ENCODE measurements at regions of chr17 and their contacts with region 1.

Region 1: DNA sequence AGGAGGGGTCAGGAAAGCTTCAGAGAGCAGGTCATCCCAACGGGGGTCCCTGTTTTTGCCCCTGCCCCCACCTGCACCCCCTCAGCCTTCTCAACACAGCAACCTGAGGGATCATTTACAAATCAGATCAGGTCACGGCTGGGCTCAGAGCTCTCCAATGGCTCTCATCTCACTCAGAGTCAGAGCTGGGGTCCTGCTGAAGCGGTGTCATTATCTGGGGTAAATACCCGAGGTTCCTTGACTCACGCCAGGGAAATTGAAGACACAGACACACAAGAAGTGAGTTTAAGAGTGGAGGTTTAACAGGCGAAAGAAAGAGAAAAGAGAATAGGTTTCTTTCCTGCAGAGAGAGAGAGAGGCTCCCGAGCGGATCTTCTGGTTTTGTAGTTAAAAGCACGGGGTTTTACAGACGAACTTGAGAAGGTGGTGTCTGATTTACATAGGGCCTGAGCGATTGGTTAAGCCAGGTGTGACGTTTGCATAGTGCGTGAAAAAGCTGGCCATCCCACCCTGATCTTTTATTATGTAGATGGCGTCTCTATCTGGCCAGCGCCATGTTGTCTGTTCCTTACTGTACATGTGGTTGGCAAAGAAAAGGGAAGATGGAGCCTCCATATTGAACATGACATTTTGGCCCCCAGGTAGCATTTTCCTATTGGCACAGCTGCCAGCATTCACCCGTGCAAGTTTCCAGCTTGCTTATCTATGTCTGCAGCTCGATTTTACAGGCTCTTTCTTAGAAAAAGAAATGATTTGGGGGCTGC is 51.4 kb downstream of the WSB1 start:
- DNase-seq: peak; percentile 61 to 95 (median 76)
- ATAC-seq: peak; percentile 93
- H3K4me3 ChIP-seq: peak overlapping the region; percentile 40
- H3K27ac ChIP-seq: peak overlapping the region; percentile 95
- H3K4me1 ChIP-seq: peaks cover 25 to 48% of the 10 kb centered on the region in 2 experiments
- H3K27me3 ChIP-seq: no peaks in the 10 kb centered on the region
- CTCF ChIP-seq: no peak
- EP300 ChIP-seq: no peak; the same call in 1 of the 2 replicates
- POLR2A ChIP-seq: peak; percentile 92
- RAD21 ChIP-seq: no peak

Region 2: GRCh38 chr17:27332485-27333409 is 12.6 kb before region 1 on chr17:
- CTCF ChIA-PET with region 1: no interaction called
- POLR2A ChIA-PET with region 1: interaction called, 39 read pairs
- in situ Hi-C with region 1: no loop called
- intact Hi-C with region 1: no loop called
- DNase-seq: peak; percentile 92 to 99 (median 94)
- ATAC-seq: peak; percentile 97
- H3K4me3 ChIP-seq: peak overlapping the region; percentile 39
- H3K27ac ChIP-seq: peak overlapping the region; percentile 88
- H3K4me1 ChIP-seq: peaks cover 22 to 31% of the 10 kb centered on the region in 2 experiments; a peak in 4 of 5 replicates
- H3K27me3 ChIP-seq: no peaks in the 10 kb centered on the region
- CTCF ChIP-seq: peak; percentile 90 to 96 (median 95)
- EP300 ChIP-seq: peak; percentile 28; the same call in 1 of the 2 replicates
- POLR2A ChIP-seq: peak; percentile 72
- RAD21 ChIP-seq: peak; percentile 98 to 99

Region 3: DNA sequence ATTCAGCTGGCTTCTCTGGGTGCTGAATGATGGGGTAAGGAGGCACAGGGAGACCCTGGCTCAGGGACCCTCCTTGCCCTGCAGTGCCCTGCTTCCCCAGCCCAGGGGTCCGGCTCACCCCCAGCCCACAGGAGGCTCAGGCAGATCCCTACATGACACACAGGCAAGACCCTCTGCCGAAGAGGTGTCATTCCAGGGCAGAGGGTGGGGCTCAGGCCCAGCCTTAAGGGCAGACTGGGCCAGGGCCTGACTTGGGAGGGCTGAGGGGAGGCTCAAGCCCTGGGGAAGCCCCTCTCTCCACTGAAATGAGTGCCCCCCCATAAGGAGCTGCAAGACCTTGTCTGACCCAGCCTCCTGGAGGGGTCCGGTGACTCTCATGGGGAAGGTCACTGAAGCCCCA is 80.7 kb after region 1 on chr17:
- CTCF ChIA-PET with region 1: no interaction called
- POLR2A ChIA-PET with region 1: no interaction called
- in situ Hi-C with region 1: no loop called
- intact Hi-C with region 1: no loop called
- DNase-seq: no peak
- ATAC-seq: peak; percentile 14; the same call in 1 of the 3 replicates
- H3K4me3 ChIP-seq: no peak overlapping the region
- H3K27ac ChIP-seq: no peak overlapping the region
- H3K4me1 ChIP-seq: peaks cover 0 to 31% of the 10 kb centered on the region in 2 experiments; a peak in 2 of 5 replicates
- H3K27me3 ChIP-seq: no peaks in the 10 kb centered on the region
- CTCF ChIP-seq: no peak
- EP300 ChIP-seq: no peak
- POLR2A ChIP-seq: no peak
- RAD21 ChIP-seq: no peak